CD4-positive, alpha-beta T cell (primary cell): ENCODE measurements at regions of chr12 and their contacts with region 1.

Region 1: GRCh38 chr12:110826592-110827200 is 20.1 kb upstream of the CCDC63 start:
- DNase-seq: peak; percentile 72 to 89 (median 78)
- ATAC-seq: peak; percentile 98
- H3K4me3 ChIP-seq: no peak overlapping the region
- H3K4me3 Mint-ChIP-seq: no peak overlapping the region
- H3K27ac ChIP-seq: no peak overlapping the region
- H3K27ac Mint-ChIP-seq: no peak overlapping the region
- H3K4me1 ChIP-seq: peaks cover 6% of the 10 kb centered on the region
- H3K4me1 Mint-ChIP-seq: peaks cover 7% of the 10 kb centered on the region
- H3K27me3 ChIP-seq: no peaks in the 10 kb centered on the region
- H3K27me3 Mint-ChIP-seq: peaks cover 10% of the 10 kb centered on the region
- CTCF ChIP-seq: peak; percentile 68

Region 2: GRCh38 chr12:110513842-110514241 is 312.9 kb before region 1 on chr12:
- CTCF ChIA-PET with region 1: no interaction called
- POLR2A ChIA-PET with region 1: no interaction called
- intact Hi-C with region 1: loop called in 1 of 2 experiments (anchors 5 kb)
- DNase-seq: no peak
- ATAC-seq: no peak
- H3K4me3 ChIP-seq: no peak overlapping the region
- H3K4me3 Mint-ChIP-seq: no peak overlapping the region
- H3K27ac ChIP-seq: no peak overlapping the region
- H3K27ac Mint-ChIP-seq: no peak overlapping the region
- H3K4me1 ChIP-seq: no peaks in the 10 kb centered on the region
- H3K4me1 Mint-ChIP-seq: no peaks in the 10 kb centered on the region
- H3K27me3 ChIP-seq: no peaks in the 10 kb centered on the region
- H3K27me3 Mint-ChIP-seq: no peaks in the 10 kb centered on the region
- CTCF ChIP-seq: no peak

Region 3: DNA sequence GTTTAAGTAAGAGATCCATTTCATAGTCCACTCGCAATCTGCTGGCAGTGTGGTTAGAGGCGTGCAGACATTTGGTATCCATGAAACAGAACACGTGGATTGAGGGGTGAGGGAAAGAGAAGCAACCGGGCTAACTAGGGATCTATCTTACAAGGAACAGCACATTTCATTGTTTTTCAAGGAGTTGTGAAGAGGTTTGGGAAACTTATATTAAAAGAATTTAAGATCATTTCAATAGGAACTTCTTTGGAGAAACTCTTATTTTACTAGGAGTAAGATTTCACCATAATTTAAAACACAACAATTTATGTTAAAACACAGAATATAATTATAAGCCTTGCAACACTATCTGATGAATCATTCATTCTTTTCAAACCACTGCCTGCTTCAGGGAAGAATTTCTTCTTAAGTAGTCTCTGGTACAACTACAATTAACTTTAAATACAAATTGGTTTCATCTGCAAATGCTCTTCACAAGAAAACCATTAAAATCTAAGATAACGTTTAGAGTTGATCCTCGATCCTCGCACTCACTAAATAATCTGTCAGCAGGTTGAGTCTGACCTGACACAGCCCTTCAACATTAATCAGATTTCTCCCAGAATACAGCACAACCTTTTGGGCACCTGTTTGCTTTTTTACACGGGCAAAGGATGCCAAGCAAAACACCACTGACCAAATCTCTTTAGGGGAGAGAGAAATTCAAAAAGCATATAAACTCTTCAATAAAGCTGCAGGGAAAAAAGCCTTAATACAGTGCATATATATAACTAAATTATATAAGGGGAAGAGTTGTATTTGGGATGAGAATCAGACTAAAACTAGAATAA is 270.9 kb before region 1 on chr12:
- CTCF ChIA-PET with region 1: no interaction called
- POLR2A ChIA-PET with region 1: no interaction called
- intact Hi-C with region 1: loop called (anchors 1 to 5 kb)
- DNase-seq: no peak
- ATAC-seq: no peak
- H3K4me3 ChIP-seq: no peak overlapping the region
- H3K4me3 Mint-ChIP-seq: no peak overlapping the region
- H3K27ac ChIP-seq: no peak overlapping the region
- H3K27ac Mint-ChIP-seq: peak overlapping the region; percentile 25
- H3K4me1 ChIP-seq: peaks cover 35% of the 10 kb centered on the region
- H3K4me1 Mint-ChIP-seq: peaks cover 60% of the 10 kb centered on the region
- H3K27me3 ChIP-seq: no peaks in the 10 kb centered on the region
- H3K27me3 Mint-ChIP-seq: no peaks in the 10 kb centered on the region
- CTCF ChIP-seq: no peak

Region 4: DNA sequence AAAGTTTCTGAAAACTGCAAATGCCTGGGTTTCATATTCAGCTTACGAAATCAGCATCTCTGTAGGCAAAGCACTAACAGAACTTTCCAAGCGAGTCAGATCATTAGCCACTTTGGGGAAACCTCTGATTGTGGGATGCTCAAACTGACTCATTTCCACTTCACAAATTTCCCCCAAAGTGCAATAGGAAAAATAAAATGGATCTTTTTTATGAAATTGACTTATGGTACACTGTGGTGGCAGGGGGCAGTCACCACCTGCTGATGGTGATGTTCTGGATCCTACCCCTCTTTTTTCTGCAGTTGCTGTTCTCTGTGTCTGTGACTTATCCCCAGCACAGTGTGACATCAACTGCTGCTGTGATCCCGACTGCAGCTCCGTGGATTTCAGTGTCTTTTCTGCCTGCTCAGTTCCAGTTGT is 207.2 kb before region 1 on chr12:
- CTCF ChIA-PET with region 1: no interaction called
- POLR2A ChIA-PET with region 1: interaction called, 3 read pairs
- intact Hi-C with region 1: loop called (anchors 2 to 5 kb)
- DNase-seq: peak in 2 of 14 experiments; percentile 37 to 44
- ATAC-seq: peak; percentile 34
- H3K4me3 ChIP-seq: no peak overlapping the region
- H3K4me3 Mint-ChIP-seq: no peak overlapping the region
- H3K27ac ChIP-seq: no peak overlapping the region
- H3K27ac Mint-ChIP-seq: no peak overlapping the region
- H3K4me1 ChIP-seq: peaks cover 3% of the 10 kb centered on the region
- H3K4me1 Mint-ChIP-seq: peaks cover under 1% of the 10 kb centered on the region
- H3K27me3 ChIP-seq: no peaks in the 10 kb centered on the region
- H3K27me3 Mint-ChIP-seq: no peaks in the 10 kb centered on the region
- CTCF ChIP-seq: no peak

Region 5: DNA sequence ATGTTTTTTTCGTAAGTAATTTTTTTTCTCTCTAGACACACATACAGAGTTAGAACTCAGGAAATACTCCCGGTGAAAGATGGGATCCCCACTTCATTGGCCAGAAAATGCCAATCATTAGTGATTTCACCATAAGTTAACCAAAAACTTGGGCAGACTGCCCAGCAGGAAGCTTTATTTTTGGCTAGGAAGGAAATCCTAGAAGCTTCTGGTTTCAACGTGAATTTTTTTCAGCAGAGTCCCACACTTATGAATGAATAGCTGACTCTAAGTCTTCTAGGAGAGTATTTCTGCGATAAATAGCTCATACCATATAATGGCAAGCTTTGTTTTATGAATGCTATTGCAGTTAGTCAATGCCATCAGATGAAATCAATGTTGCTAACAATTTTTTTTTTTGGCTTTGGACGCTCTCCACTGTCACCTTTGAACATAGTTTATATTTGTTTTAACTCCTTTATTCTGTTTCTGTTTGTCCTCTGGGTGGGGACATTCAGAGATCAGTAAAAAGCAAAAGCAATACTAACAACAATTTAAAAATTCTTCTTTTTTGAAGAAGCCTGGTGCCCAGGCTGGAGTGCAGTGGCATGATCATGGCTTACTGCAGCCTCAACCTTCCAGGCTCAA is 93.5 kb before region 1 on chr12:
- CTCF ChIA-PET with region 1: no interaction called
- POLR2A ChIA-PET with region 1: no interaction called
- intact Hi-C with region 1: loop called in 1 of 2 experiments (anchors 10 kb)
- DNase-seq: no peak
- ATAC-seq: no peak
- H3K4me3 ChIP-seq: no peak overlapping the region
- H3K4me3 Mint-ChIP-seq: peak overlapping the region; percentile 15
- H3K27ac ChIP-seq: no peak overlapping the region
- H3K27ac Mint-ChIP-seq: peak overlapping the region; percentile 63
- H3K4me1 ChIP-seq: peaks cover 61% of the 10 kb centered on the region
- H3K4me1 Mint-ChIP-seq: peaks cover 76% of the 10 kb centered on the region
- H3K27me3 ChIP-seq: no peaks in the 10 kb centered on the region
- H3K27me3 Mint-ChIP-seq: no peaks in the 10 kb centered on the region
- CTCF ChIP-seq: no peak

Region 6: DNA sequence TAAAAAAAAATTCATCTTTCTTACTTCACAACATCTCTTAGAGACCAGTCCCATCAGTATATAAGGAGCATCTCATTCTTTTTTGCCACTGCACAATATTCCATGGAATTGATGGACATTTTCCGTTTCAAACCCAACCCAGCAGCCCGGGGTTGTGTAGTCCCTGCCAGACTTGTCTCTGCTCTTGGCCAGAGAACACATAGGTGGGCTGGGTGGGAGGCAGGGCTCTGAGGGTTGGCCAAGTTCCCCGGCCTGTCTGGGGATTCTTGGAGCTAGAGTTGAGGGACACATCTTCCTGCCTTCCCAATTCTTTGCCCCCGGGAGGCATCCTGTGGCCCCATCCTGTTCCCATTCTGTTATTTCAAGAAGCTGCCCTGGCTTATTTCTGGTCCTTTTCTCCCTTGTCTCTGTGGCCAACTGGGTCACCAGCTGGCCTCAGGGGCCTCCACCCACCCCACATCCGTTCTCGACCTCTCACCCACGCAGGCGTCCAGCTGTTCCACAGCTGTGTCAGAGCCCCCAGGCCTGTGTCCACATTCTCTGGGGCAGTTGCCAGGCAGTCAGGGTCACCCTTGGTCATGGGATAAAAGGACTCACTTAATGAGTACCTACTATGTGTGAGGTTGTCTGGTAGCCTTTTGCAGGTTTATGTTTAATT is 31.9 kb before region 1 on chr12:
- CTCF ChIA-PET with region 1: no interaction called
- POLR2A ChIA-PET with region 1: no interaction called
- intact Hi-C with region 1: no loop called
- DNase-seq: no peak
- ATAC-seq: no peak
- H3K4me3 ChIP-seq: no peak overlapping the region
- H3K4me3 Mint-ChIP-seq: no peak overlapping the region
- H3K27ac ChIP-seq: no peak overlapping the region
- H3K27ac Mint-ChIP-seq: no peak overlapping the region
- H3K4me1 ChIP-seq: no peaks in the 10 kb centered on the region
- H3K4me1 Mint-ChIP-seq: no peaks in the 10 kb centered on the region
- H3K27me3 ChIP-seq: no peaks in the 10 kb centered on the region
- H3K27me3 Mint-ChIP-seq: no peaks in the 10 kb centered on the region
- CTCF ChIP-seq: no peak

Region 7: DNA sequence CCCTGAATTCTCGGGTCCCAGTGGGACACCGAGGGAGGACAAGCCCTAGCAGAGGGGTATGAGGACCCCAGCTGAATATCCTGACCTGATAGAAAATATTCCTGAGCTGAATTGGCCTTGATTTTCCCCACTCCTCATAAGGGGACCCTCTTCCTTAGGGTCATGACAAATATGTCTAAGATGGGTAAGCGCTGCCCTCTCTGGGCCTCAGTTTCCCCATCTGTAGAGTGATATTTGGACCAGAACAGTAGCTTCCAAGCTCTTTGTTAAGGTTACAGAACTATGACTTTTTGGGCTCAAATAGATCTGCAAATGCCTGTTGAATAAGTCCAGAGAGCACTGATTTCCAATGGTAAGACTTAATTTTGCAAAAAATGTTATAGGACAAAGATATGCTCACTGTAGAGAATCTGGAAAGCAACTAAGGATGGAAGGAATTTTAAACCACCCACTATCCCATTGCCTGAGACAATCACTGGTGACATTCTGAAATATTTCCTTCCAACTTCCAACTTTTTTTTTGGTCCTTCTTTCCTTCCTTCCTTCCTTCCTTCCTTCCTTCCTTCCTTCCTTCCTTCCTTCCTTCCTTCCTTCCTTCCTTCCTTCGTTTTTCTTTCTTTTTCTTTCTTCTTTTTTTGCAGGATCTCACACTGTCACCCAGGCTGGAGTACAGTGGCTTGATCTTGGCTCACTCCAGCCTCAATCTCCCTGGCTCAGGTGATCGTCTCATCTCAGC is 61.7 kb after region 1 on chr12:
- CTCF ChIA-PET with region 1: interaction called, 3 read pairs
- POLR2A ChIA-PET with region 1: no interaction called
- intact Hi-C with region 1: loop called in 1 of 2 experiments (anchors 5 kb)
- DNase-seq: no peak
- ATAC-seq: no peak
- H3K4me3 ChIP-seq: peak overlapping the region; percentile 71
- H3K4me3 Mint-ChIP-seq: peak overlapping the region; percentile 89
- H3K27ac ChIP-seq: no peak overlapping the region
- H3K27ac Mint-ChIP-seq: no peak overlapping the region
- H3K4me1 ChIP-seq: peaks cover 11% of the 10 kb centered on the region
- H3K4me1 Mint-ChIP-seq: peaks cover 3% of the 10 kb centered on the region
- H3K27me3 ChIP-seq: no peaks in the 10 kb centered on the region
- H3K27me3 Mint-ChIP-seq: no peaks in the 10 kb centered on the region
- CTCF ChIP-seq: peak; percentile 54